ENCODE measurements at regions of chr2 and their contacts with region 1.

Region 1: GRCh38 chr2:191811807-191812602 is 34.9 kb downstream of the CAVIN2 start:
- DNase-seq: peak; percentile 62
- ATAC-seq: peak; percentile 93
- H3K4me3 ChIP-seq: no peak overlapping the region
- H3K27ac ChIP-seq: no peak overlapping the region
- H3K4me1 ChIP-seq: no peaks in the 10 kb centered on the region
- H3K27me3 ChIP-seq: no peaks in the 10 kb centered on the region
- CTCF ChIP-seq: peak; percentile 81

Region 2: GRCh38 chr2:191302459-191303139 is 509.4 kb before region 1 on chr2:
- intact Hi-C with region 1: no loop called
- DNase-seq: no peak
- ATAC-seq: peak; percentile 20
- H3K4me3 ChIP-seq: no peak overlapping the region
- H3K27ac ChIP-seq: no peak overlapping the region
- H3K4me1 ChIP-seq: peaks cover 39% of the 10 kb centered on the region
- H3K27me3 ChIP-seq: no peaks in the 10 kb centered on the region
- CTCF ChIP-seq: no peak

Region 3: GRCh38 chr2:191885098-191885497 is 73.1 kb after region 1 on chr2:
- intact Hi-C with region 1: no loop called
- DNase-seq: no peak
- ATAC-seq: no peak
- H3K4me3 ChIP-seq: no peak overlapping the region
- H3K27ac ChIP-seq: no peak overlapping the region
- H3K4me1 ChIP-seq: no peaks in the 10 kb centered on the region
- H3K27me3 ChIP-seq: no peaks in the 10 kb centered on the region
- CTCF ChIP-seq: no peak

Region 4: DNA sequence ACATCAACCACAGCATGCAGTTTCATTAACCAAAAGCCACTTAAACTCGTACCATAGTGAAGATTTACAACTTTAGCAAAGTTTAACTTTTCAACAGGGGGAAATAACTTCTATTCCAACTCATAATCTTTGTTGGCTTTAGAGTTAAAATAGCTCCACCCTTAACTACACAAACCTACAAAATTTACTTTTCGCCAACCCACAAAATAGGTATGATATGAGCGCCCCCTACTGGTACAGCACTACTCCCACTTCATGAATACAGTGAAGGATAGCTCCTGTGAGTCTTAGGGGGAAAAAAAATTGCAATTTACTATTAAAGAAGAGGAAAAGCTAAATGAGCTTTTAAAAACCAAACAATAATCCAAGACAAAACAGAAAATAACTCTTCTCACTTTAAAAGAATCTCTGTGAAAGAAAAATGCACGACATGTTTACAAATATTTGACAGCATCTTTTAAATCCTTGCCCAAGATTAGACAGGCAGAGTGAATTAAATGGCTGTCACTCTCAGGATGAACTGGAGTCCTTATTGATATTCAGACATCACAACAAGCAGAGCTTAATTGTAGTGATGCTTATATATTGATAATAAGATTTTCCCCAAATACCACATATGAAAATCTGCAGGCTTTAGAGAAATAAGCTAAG is 350.5 kb after region 1 on chr2:
- intact Hi-C with region 1: loop called (anchors 5 kb)
- DNase-seq: no peak
- ATAC-seq: peak; percentile 96
- H3K4me3 ChIP-seq: peak overlapping the region; percentile 11
- H3K27ac ChIP-seq: no peak overlapping the region
- H3K4me1 ChIP-seq: peaks cover 8% of the 10 kb centered on the region
- H3K27me3 ChIP-seq: no peaks in the 10 kb centered on the region
- CTCF ChIP-seq: peak; percentile 94